HCT116 (cell line): ENCODE measurements at regions of chr3 and their contacts with region 1.

Region 1: DNA sequence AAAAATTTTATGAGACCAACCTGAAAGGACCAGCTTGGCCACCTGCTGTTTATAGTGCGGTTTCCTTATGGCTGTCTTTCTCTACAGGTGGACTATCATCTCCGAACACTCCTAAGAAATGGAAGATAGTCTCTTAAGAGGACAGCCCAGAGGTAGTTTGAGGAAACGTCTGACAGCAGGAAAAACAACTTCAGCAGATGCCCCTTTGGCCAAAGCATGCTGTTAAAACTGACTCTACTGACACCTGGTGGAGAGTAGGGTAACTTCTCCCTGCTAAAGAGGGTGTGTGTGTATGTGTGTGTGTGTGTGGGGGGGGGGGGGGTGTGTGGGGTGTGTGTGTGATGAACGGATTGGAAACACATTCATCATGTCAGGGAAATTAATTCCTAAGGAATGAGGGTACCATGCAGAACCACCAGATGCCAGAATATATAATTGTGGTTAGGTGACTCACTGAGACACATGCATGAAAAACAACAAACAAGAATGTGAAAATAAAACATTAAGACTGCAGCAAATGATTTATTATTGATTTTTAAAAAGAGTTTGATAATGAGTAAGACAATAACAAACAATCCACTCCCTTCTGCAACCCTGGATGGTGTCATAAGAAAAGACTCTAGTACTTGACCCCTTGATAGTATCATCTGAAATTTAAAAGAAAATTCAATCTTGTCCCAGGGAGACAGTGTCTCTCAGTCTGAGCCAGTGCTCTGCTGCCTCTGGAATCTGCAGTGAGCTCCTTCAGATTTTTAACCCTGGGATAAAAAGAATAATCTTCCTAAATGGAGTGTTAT is 256.5 kb downstream of the THRB start:
- DNase-seq: peak; percentile 75
- ATAC-seq: peak; percentile 91
- H3K4me3 ChIP-seq: no peak overlapping the region
- H3K27ac ChIP-seq: no peak overlapping the region
- H3K4me1 ChIP-seq: peaks cover 7 to 17% of the 10 kb centered on the region in 2 experiments; a peak in 2 of 4 replicates
- H3K27me3 ChIP-seq: no peaks in the 10 kb centered on the region
- CTCF ChIP-seq: peak; percentile 76 to 93 (median 82)
- POLR2A ChIP-seq: no peak
- RAD21 ChIP-seq: peak; percentile 89

Region 2: GRCh38 chr3:24069045-24069444 is 169.1 kb before region 1 on chr3:
- CTCF ChIA-PET with region 1: no interaction called
- POLR2A ChIA-PET with region 1: no interaction called
- RAD21 ChIA-PET with region 1: no interaction called
- intact Hi-C with region 1: loop called (anchors 2 kb)
- DNase-seq: no peak
- ATAC-seq: 0 out of 2 replicates have a peak, but pooled peaks have one; percentile 40
- H3K4me3 ChIP-seq: no peak overlapping the region
- H3K27ac ChIP-seq: no peak overlapping the region
- H3K4me1 ChIP-seq: no peaks in the 10 kb centered on the region
- H3K27me3 ChIP-seq: no peaks in the 10 kb centered on the region
- CTCF ChIP-seq: peak; percentile 26 to 44 (median 35); a peak in 4 of 6 replicates
- POLR2A ChIP-seq: no peak
- RAD21 ChIP-seq: peak; percentile 66